Mammary epithelial cell (primary cell): ENCODE measurements at regions of chr1 and their contacts with region 1.

Region 1: DNA sequence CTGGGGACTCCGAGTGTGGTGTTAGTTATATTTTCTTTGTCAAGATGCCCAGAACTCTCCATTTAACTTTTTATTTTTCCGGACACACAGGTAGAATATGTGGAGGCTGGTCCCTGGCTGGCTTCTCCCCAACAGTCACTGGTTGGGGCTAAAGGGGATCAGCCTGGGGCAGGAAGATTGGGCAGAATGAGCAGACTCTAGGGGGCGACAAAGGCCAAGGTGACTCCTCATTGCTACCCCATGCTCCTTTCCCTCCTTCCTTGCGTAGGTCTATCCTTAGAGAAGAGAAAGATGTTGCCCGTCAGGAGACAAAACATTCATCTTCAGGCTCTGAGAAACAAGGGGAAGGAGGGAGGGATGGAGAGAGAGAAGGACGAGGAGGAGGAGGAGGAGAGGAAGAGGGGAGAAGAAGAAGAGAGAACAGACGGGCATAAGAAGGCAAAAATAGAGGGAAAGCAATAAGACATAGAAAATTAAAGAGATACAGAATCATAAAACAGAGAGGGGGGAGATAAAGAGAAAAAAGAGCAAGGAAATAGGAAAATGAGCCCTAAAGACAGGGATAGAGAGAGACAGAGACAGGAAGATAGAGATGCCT is 89.9 kb downstream of the FOXD2 start:
- DNase-seq: peak; percentile 36
- H3K4me3 ChIP-seq: no peak overlapping the region
- H3K27ac ChIP-seq: no peak overlapping the region
- H3K4me1 ChIP-seq: no peaks in the 10 kb centered on the region
- H3K27me3 ChIP-seq: peaks cover 6% of the 10 kb centered on the region
- CTCF ChIP-seq: peak; percentile 76 to 85

Region 2: DNA sequence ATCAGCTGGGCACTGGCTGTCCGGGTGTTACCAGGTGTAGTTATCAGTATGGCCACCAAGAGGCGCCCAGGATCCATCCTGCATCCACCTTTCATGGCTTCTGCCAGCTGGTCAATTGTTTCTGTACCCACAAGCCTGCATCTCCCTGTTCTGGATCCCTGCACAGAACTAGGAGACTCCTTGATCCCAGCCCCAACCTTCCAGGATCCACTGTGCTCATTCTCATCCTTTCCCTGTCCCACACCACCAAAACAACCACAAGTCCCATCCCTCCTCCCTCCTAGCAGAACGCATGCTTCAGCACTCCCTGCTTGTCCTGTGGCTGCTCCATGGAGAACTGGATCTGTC is 138.9 kb before region 1 on chr1:
- CTCF ChIA-PET with region 1: no interaction called
- dilution Hi-C with region 1: no loop called
- in situ Hi-C with region 1: no loop called
- intact Hi-C with region 1: loop called (anchors 1 kb)
- DNase-seq: peak; percentile 56
- H3K4me3 ChIP-seq: no peak overlapping the region
- H3K27ac ChIP-seq: no peak overlapping the region
- H3K4me1 ChIP-seq: no peaks in the 10 kb centered on the region
- H3K27me3 ChIP-seq: no peaks in the 10 kb centered on the region
- CTCF ChIP-seq: peak; percentile 87 to 89

Region 3: GRCh38 chr1:47437447-47438164 is 90.2 kb before region 1 on chr1 and contains the start of gene FOXD2:
- CTCF ChIA-PET with region 1: no interaction called
- dilution Hi-C with region 1: no loop called
- in situ Hi-C with region 1: loop called in 1 of 2 experiments (anchors 10 kb)
- intact Hi-C with region 1: loop called (anchors 1 kb)
- DNase-seq: peak; percentile 86
- H3K4me3 ChIP-seq: peak within 1 kb of the TSS; percentile 67 to 91 (median 71)
- H3K27ac ChIP-seq: peak within 1 kb of the TSS; percentile 56
- H3K4me1 ChIP-seq: peaks cover 35% of the 10 kb centered on the region
- H3K27me3 ChIP-seq: peaks cover 19% of the 10 kb centered on the region
- CTCF ChIP-seq: peak; percentile 39 to 75
- total RNA-seq, gene FOXD2: 0.50 to 1.1 TPM

Region 4: GRCh38 chr1:47491341-47491753 is 36.4 kb before region 1 on chr1:
- CTCF ChIA-PET with region 1: no interaction called
- dilution Hi-C with region 1: no loop called
- in situ Hi-C with region 1: no loop called
- intact Hi-C with region 1: no loop called
- DNase-seq: no peak
- H3K4me3 ChIP-seq: no peak overlapping the region
- H3K27ac ChIP-seq: no peak overlapping the region
- H3K4me1 ChIP-seq: no peaks in the 10 kb centered on the region
- H3K27me3 ChIP-seq: peaks cover 13% of the 10 kb centered on the region
- CTCF ChIP-seq: no peak

Region 5: DNA sequence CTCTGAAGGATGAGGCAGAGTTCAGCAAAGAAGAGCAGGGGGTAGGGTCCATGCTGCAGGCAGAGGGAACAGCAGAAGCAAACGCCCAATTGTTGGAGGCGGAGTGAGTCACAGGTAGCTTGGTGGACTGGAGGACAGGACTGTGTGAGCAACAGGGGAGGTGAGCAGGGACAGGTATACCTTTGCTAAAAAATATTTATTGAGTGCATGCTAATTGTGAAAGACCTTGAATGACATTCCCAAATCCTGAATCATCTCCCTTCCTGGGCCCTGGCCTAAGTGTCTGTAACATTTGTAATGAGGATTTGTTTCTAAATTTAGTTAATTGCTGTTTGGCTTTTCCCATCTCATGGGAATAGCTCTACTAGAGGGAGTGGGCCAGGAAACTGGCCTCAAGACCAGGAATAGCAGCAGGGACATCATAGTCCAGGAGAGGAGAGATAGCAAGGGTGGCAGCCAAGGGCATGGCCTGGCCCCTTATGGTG is 33.8 kb after region 1 on chr1:
- CTCF ChIA-PET with region 1: no interaction called
- dilution Hi-C with region 1: no loop called
- in situ Hi-C with region 1: no loop called
- intact Hi-C with region 1: no loop called
- DNase-seq: peak; percentile 86
- H3K4me3 ChIP-seq: no peak overlapping the region
- H3K27ac ChIP-seq: peak overlapping the region; percentile 5
- H3K4me1 ChIP-seq: peaks cover 25% of the 10 kb centered on the region
- H3K27me3 ChIP-seq: no peaks in the 10 kb centered on the region
- CTCF ChIP-seq: no peak

Region 6: DNA sequence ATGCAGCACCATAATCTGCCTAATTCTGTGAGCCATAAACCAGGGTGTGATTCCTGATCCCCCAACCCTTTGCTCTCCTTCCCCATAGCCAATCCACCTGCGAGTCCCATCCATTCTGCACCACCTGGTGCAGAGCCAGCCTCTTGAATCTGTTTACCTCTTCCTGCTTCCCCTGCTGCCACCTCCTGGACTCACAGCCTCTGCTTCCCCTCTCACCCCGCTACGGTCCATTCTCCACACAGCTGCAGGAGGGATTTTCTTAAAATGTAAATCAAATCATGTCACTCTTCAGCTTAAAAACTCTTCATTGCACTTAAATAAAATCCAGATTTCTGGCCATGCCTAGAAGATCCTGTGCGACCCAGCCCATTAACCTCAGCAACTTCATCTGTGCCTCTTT is 96.8 kb after region 1 on chr1:
- CTCF ChIA-PET with region 1: no interaction called
- dilution Hi-C with region 1: no loop called
- in situ Hi-C with region 1: loop called (anchors 10 kb)
- intact Hi-C with region 1: loop called (anchors 1 kb)
- DNase-seq: peak; percentile 10
- H3K4me3 ChIP-seq: no peak overlapping the region
- H3K27ac ChIP-seq: no peak overlapping the region
- H3K4me1 ChIP-seq: no peaks in the 10 kb centered on the region
- H3K27me3 ChIP-seq: no peaks in the 10 kb centered on the region
- CTCF ChIP-seq: peak; percentile 39 to 72

Region 7: DNA sequence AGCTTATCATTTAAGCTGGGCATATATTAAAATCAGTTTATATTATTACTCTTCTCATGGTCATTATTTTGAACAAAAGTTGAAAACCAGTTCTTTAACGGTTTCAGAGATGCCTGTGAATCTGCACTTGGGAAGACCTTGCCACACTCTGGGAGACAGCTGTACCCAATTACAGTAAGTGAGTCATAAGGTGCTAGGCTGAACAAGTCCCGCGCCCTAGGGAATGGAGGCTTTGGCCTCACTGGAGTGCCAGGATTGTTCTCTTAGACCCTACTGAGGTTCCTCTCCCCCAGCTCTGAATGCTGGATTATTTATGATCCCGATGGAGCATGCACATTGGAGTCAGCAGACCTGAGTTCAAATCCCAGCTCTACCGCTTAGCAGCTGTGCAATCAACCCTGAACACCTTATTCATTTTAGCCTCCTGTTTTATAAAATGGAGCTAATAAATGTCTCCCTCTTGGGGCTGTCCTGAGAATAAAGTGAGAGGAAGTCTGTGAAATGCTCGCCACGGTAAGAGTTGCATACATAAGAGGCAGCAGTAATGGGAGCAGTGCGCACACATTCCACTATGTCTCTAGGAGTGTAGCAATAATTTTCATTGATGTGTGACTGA is 176.3 kb after region 1 on chr1:
- CTCF ChIA-PET with region 1: no interaction called
- dilution Hi-C with region 1: no loop called
- in situ Hi-C with region 1: loop called in 1 of 2 experiments (anchors 5 kb)
- intact Hi-C with region 1: no loop called
- DNase-seq: peak; percentile 39
- H3K4me3 ChIP-seq: no peak overlapping the region
- H3K27ac ChIP-seq: no peak overlapping the region
- H3K4me1 ChIP-seq: peaks cover 11% of the 10 kb centered on the region
- H3K27me3 ChIP-seq: peaks cover 7% of the 10 kb centered on the region
- CTCF ChIP-seq: peak in 1 of 2 donors; percentile 27

Region 8: DNA sequence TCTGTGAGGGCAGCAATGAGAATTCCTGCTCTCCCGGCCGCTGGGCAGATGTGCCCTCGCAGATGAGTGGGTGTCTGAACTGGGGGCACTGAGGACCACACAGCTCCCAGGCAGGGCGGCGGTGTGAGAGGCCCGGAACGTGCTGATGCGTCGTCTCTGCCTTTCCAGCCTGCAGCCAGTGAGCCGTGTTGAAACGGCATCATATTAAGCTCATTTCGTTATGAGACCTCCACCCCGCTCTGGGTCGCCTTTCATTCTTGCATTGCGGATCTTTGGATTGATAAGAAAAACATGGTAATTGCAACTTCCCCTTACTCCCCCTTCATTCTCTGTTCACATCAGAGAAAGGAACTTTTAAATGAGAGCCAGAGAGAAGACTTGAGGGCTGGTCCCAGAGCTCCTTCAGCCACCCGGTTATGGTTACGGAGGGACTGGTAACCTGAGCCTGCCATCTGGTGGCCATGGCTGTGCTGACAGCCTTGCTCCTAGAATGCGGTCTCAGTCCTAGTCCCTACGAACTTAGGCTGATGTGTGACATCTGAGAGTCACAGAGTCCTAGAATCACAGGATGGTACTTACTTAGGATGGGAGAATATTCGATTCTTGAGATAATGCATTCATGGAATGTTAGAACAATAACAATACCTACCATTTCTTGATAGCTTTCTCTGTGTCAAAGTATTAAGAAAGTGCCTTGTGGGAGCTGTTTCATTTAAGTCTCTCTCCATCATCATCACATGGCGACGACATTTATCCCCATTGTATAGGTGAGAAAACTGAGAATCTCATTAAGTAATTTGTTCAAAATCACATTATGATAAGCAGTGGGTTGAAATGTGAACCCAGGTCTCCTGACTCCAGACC is 198.5 kb after region 1 on chr1:
- CTCF ChIA-PET with region 1: no interaction called
- dilution Hi-C with region 1: no loop called
- in situ Hi-C with region 1: no loop called
- intact Hi-C with region 1: loop called (anchors 1 kb)
- DNase-seq: peak; percentile 58
- H3K4me3 ChIP-seq: peak overlapping the region in 1 of 3 experiments; percentile 8
- H3K27ac ChIP-seq: no peak overlapping the region
- H3K4me1 ChIP-seq: peaks cover 20% of the 10 kb centered on the region
- H3K27me3 ChIP-seq: no peaks in the 10 kb centered on the region
- CTCF ChIP-seq: peak; percentile 94

Region 9: GRCh38 chr1:48061162-48062136 is 533.7 kb after region 1 on chr1:
- CTCF ChIA-PET with region 1: no interaction called
- dilution Hi-C with region 1: no loop called
- in situ Hi-C with region 1: no loop called
- intact Hi-C with region 1: loop called (anchors 10 kb)
- DNase-seq: peak; percentile 55
- H3K4me3 ChIP-seq: no peak overlapping the region
- H3K27ac ChIP-seq: no peak overlapping the region
- H3K4me1 ChIP-seq: no peaks in the 10 kb centered on the region
- H3K27me3 ChIP-seq: no peaks in the 10 kb centered on the region
- CTCF ChIP-seq: peak; percentile 74 to 82